ENCODE measurements at regions of chr13 and their contacts with region 1.

Region 1: GRCh38 chr13:79427265-79427664 is 21.2 kb upstream of the RBM26 start:
- DNase-seq: no peak
- CTCF ChIP-seq: no peak

Region 2: DNA sequence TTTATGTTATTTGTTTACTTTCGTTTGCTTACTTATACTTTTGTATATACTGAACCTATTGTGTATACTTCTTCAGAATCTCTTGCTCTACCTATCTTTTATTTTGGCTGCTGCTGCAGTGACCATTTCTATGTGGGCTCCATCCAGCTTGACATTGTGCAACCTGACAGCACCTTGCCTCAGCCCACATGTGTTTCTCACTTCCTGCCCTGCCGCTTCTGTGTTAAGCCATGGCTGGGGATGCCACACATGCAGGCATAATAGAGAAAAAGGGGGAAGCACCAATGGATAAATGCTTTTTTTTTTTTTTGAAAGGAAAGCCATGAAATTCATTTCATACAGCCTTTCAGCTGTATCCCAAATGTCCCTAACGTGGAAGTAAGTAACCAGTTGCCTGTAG is 168.8 kb before region 1 on chr13:
- in situ Hi-C with region 1: no loop called
- DNase-seq: no peak
- CTCF ChIP-seq: no peak

Region 3: GRCh38 chr13:79538757-79539156 is 111.5 kb after region 1 on chr13:
- in situ Hi-C with region 1: loop called (anchors 5 kb)
- DNase-seq: no peak
- CTCF ChIP-seq: no peak